B cell (primary cell): ENCODE measurements at regions of chr12 and their contacts with region 1.

Region 1: GRCh38 chr12:104456417-104456949 is at the start of gene CHST11:
- DNase-seq: peak; percentile 84
- ATAC-seq: peak; percentile 75
- H3K4me3 ChIP-seq: peak within 1 kb of the TSS; percentile 76 to 99 (median 97)
- H3K4me3 Mint-ChIP-seq: peak within 1 kb of the TSS; percentile 98
- H3K27ac ChIP-seq: peak within 1 kb of the TSS; percentile 71 to 92
- H3K27ac Mint-ChIP-seq: peak within 1 kb of the TSS; percentile 94
- H3K4me1 ChIP-seq: peaks cover 28 to 36% of the 10 kb centered on the region in 2 donors
- H3K4me1 Mint-ChIP-seq: peaks cover 47% of the 10 kb centered on the region
- H3K27me3 ChIP-seq: no peaks in the 10 kb centered on the region
- H3K27me3 Mint-ChIP-seq: no peaks in the 10 kb centered on the region
- CTCF ChIP-seq: peak; percentile 28
- total RNA-seq, gene CHST11: 135 and 152 TPM in 2 replicates

Region 2: GRCh38 chr12:104473374-104473983 is 17.0 kb after region 1 on chr12:
- CTCF ChIA-PET with region 1: interaction called, 7 read pairs
- POLR2A ChIA-PET with region 1: interaction called, 12 read pairs
- intact Hi-C with region 1: loop called (anchors 2 kb)
- DNase-seq: peak; percentile 71
- ATAC-seq: peak; percentile 81
- H3K4me3 ChIP-seq: peak overlapping the region in 4 of 5 experiments; percentile 5 to 49 (median 22)
- H3K4me3 Mint-ChIP-seq: peak overlapping the region; percentile 86
- H3K27ac ChIP-seq: peak overlapping the region; percentile 54 to 88
- H3K27ac Mint-ChIP-seq: peak overlapping the region; percentile 94
- H3K4me1 ChIP-seq: peaks cover 80 to 87% of the 10 kb centered on the region in 2 donors
- H3K4me1 Mint-ChIP-seq: peaks cover 86% of the 10 kb centered on the region
- H3K27me3 ChIP-seq: no peaks in the 10 kb centered on the region
- H3K27me3 Mint-ChIP-seq: no peaks in the 10 kb centered on the region
- CTCF ChIP-seq: no peak

Region 3: DNA sequence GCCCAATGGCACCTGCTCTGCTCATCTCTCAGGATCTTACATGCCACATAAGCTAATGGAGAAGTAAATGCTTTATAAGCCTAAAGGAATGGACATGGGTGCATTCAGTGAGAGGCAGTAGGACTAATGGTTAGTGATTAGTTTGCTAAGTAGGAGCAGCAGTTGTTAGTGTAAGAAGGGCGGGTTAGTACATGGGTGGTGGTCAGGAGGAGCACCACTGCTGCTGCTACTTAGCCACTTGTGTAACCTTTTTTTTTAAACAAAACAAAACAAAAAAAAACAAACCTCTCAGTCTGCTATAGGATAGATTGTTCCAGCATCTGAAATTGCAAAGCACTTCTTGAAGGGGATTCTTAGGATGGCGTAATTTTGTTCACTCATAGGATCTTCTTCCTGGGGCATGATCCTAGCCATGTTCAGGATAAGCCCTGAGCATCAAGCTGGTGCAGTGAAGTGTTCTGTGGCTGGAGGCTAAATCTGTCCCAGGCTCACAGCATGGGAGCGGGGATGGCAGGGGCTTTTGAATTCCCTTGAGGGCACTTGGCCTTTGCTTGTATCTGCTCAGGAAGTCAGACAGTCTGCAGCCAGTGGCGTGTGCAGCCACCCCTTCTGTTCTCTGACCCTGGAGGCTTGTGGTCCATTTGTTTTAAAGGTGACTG is 63.9 kb after region 1 on chr12:
- CTCF ChIA-PET with region 1: interaction called, 6 read pairs
- POLR2A ChIA-PET with region 1: interaction called, 6 read pairs
- intact Hi-C with region 1: loop called (anchors 1 kb)
- DNase-seq: peak; percentile 80
- ATAC-seq: peak; percentile 80
- H3K4me3 ChIP-seq: peak overlapping the region in 3 of 5 experiments; percentile 5 to 40 (median 12)
- H3K4me3 Mint-ChIP-seq: peak overlapping the region; percentile 62
- H3K27ac ChIP-seq: peak overlapping the region; percentile 8 to 64
- H3K27ac Mint-ChIP-seq: peak overlapping the region; percentile 85
- H3K4me1 ChIP-seq: peaks cover 75% of the 10 kb centered on the region in 2 donors
- H3K4me1 Mint-ChIP-seq: peaks cover 92% of the 10 kb centered on the region
- H3K27me3 ChIP-seq: no peaks in the 10 kb centered on the region
- H3K27me3 Mint-ChIP-seq: no peaks in the 10 kb centered on the region
- CTCF ChIP-seq: no peak

Region 4: GRCh38 chr12:104582739-104583138 is 126.3 kb after region 1 on chr12:
- CTCF ChIA-PET with region 1: interaction called, 11 read pairs
- POLR2A ChIA-PET with region 1: interaction called, 10 read pairs
- intact Hi-C with region 1: loop called (anchors 1 kb)
- DNase-seq: peak; percentile 90
- ATAC-seq: peak; percentile 91
- H3K4me3 ChIP-seq: peak overlapping the region in 3 of 5 experiments; percentile 4 to 30 (median 26)
- H3K4me3 Mint-ChIP-seq: peak overlapping the region; percentile 59
- H3K27ac ChIP-seq: peak overlapping the region; percentile 72 to 93
- H3K27ac Mint-ChIP-seq: peak overlapping the region; percentile 69
- H3K4me1 ChIP-seq: peaks cover 75 to 80% of the 10 kb centered on the region in 2 donors
- H3K4me1 Mint-ChIP-seq: peaks cover 88% of the 10 kb centered on the region
- H3K27me3 ChIP-seq: no peaks in the 10 kb centered on the region
- H3K27me3 Mint-ChIP-seq: no peaks in the 10 kb centered on the region
- CTCF ChIP-seq: no peak

Region 5: GRCh38 chr12:104695453-104696148 is 239.1 kb after region 1 on chr12:
- CTCF ChIA-PET with region 1: interaction called, 5 read pairs
- POLR2A ChIA-PET with region 1: no interaction called
- intact Hi-C with region 1: loop called (anchors 5 kb)
- DNase-seq: peak; percentile 72
- ATAC-seq: peak; percentile 73
- H3K4me3 ChIP-seq: no peak overlapping the region
- H3K4me3 Mint-ChIP-seq: peak overlapping the region; percentile 64
- H3K27ac ChIP-seq: peak overlapping the region; percentile 26 to 58
- H3K27ac Mint-ChIP-seq: peak overlapping the region; percentile 80
- H3K4me1 ChIP-seq: peaks cover 43 to 49% of the 10 kb centered on the region in 2 donors
- H3K4me1 Mint-ChIP-seq: peaks cover 75% of the 10 kb centered on the region
- H3K27me3 ChIP-seq: no peaks in the 10 kb centered on the region
- H3K27me3 Mint-ChIP-seq: no peaks in the 10 kb centered on the region
- CTCF ChIP-seq: no peak

Region 6: GRCh38 chr12:104877123-104877705 is 420.7 kb after region 1 on chr12:
- CTCF ChIA-PET with region 1: interaction called, 4 read pairs
- POLR2A ChIA-PET with region 1: no interaction called
- intact Hi-C with region 1: loop called (anchors 5 kb)
- DNase-seq: peak; percentile 56
- ATAC-seq: no peak
- H3K4me3 ChIP-seq: no peak overlapping the region
- H3K4me3 Mint-ChIP-seq: no peak overlapping the region
- H3K27ac ChIP-seq: no peak overlapping the region
- H3K27ac Mint-ChIP-seq: no peak overlapping the region
- H3K4me1 ChIP-seq: no peaks in the 10 kb centered on the region
- H3K4me1 Mint-ChIP-seq: no peaks in the 10 kb centered on the region
- H3K27me3 ChIP-seq: no peaks in the 10 kb centered on the region
- H3K27me3 Mint-ChIP-seq: no peaks in the 10 kb centered on the region
- CTCF ChIP-seq: peak; percentile 70